Aorta (tissue), 5 donors: ENCODE measurements at regions of chr11 and their contacts with region 1.

Region 1: GRCh38 chr11:76339221-76339620 is 41.7 kb downstream of the THAP12 start:
- DNase-seq: peak in 1 of 2 donors; percentile 78
- ATAC-seq: peak; percentile 95
- H3K4me3 ChIP-seq: no peak overlapping the region
- H3K27ac ChIP-seq: peak overlapping the region; percentile 52 to 77
- H3K4me1 ChIP-seq: peaks cover 0 to 3% of the 10 kb centered on the region in 2 donors
- H3K27me3 ChIP-seq: no peaks in the 10 kb centered on the region

Region 2: GRCh38 chr11:76380967-76381719 is 41.9 kb after region 1 on chr11 and contains the starts of genes GVQW3 and THAP12:
- intact Hi-C with region 1: loop called in 1 of 2 experiments (anchors 2 kb)
- DNase-seq: peak; percentile 98 to 99
- ATAC-seq: peak; percentile 99
- H3K4me3 ChIP-seq: peak within 1 kb of the TSS; percentile 71 to 90
- H3K27ac ChIP-seq: no peak within 1 kb of the TSS
- H3K4me1 ChIP-seq: no peaks in the 10 kb centered on the region
- H3K27me3 ChIP-seq: no peaks in the 10 kb centered on the region
- total RNA-seq, gene GVQW3: 1.9 to 3.7 TPM
- total RNA-seq, gene THAP12: 36.7 to 41.0 TPM